MCF 10A (cell line): ENCODE measurements at regions of chr5 and their contacts with region 1.

Region 1: GRCh38 chr5:39691993-39692392 is 267.2 kb upstream of the DAB2 start:
- DNase-seq: peak; percentile 35
- H3K4me3 Mint-ChIP-seq: no peak overlapping the region
- H3K27ac Mint-ChIP-seq: no peak overlapping the region
- H3K4me1 Mint-ChIP-seq: no peaks in the 10 kb centered on the region
- H3K27me3 Mint-ChIP-seq: no peaks in the 10 kb centered on the region
- CTCF ChIP-seq: peak; percentile 23

Region 2: DNA sequence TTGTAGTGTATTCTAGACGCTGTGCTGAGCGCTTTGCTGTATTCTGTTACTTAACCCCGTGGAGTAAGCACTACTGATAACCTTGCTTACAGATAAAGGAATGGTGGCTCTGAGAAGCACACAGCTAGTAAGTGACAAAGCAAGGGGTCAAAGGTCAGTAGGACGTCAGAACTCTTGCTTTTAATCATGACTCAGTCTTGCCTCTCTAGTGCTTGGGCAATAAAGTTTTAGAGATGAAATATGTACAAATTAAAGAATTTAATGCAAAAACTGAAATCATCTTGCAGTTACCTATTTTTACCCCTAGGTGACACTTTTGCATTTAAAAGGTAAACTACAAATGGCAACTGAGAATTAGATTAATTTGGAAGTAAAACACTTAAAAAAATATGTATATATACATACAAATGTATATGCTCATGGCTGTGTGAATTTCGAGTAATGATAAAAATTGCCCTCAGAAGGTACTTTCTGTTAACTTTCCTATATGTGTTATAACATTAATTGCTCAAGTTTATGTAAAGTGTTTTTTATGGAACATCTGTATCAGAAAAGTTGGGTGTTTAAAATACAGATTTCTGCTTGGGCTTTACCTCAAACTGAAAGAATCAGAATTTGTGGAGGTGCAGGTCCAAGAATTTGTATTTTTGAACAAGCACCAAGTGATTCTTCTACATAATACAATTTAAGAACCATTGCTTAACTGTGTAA is 92.1 kb before region 1 on chr5:
- CTCF ChIA-PET with region 1: interaction called, 4 read pairs
- POLR2A ChIA-PET with region 1: no interaction called
- intact Hi-C with region 1: loop called (anchors 1 kb)
- DNase-seq: peak; percentile 67
- H3K4me3 Mint-ChIP-seq: no peak overlapping the region
- H3K27ac Mint-ChIP-seq: no peak overlapping the region
- H3K4me1 Mint-ChIP-seq: no peaks in the 10 kb centered on the region
- H3K27me3 Mint-ChIP-seq: peaks cover 29% of the 10 kb centered on the region
- CTCF ChIP-seq: peak; percentile 40